ENCODE measurements at regions of chr5 and their contacts with region 1.

Region 1: GRCh38 chr5:79878721-79879336 is 112.2 kb downstream of the MTX3 start:
- DNase-seq: no peak
- H3K4me3 ChIP-seq: no peak overlapping the region
- H3K27ac ChIP-seq: no peak overlapping the region
- H3K4me1 ChIP-seq: no peaks in the 10 kb centered on the region
- H3K27me3 ChIP-seq: no peaks in the 10 kb centered on the region
- CTCF ChIP-seq: peak in 1 of 3 donors; percentile 11
- POLR2A ChIP-seq: no peak

Region 2: GRCh38 chr5:79595086-79595485 is 283.7 kb before region 1 on chr5:
- intact Hi-C with region 1: loop called (anchors 5 kb)
- DNase-seq: no peak
- H3K4me3 ChIP-seq: no peak overlapping the region
- H3K27ac ChIP-seq: no peak overlapping the region
- H3K4me1 ChIP-seq: no peaks in the 10 kb centered on the region
- H3K27me3 ChIP-seq: no peaks in the 10 kb centered on the region
- CTCF ChIP-seq: no peak
- POLR2A ChIP-seq: no peak